ENCODE measurements at regions of chr11 and their contacts with region 1.

Region 1: DNA sequence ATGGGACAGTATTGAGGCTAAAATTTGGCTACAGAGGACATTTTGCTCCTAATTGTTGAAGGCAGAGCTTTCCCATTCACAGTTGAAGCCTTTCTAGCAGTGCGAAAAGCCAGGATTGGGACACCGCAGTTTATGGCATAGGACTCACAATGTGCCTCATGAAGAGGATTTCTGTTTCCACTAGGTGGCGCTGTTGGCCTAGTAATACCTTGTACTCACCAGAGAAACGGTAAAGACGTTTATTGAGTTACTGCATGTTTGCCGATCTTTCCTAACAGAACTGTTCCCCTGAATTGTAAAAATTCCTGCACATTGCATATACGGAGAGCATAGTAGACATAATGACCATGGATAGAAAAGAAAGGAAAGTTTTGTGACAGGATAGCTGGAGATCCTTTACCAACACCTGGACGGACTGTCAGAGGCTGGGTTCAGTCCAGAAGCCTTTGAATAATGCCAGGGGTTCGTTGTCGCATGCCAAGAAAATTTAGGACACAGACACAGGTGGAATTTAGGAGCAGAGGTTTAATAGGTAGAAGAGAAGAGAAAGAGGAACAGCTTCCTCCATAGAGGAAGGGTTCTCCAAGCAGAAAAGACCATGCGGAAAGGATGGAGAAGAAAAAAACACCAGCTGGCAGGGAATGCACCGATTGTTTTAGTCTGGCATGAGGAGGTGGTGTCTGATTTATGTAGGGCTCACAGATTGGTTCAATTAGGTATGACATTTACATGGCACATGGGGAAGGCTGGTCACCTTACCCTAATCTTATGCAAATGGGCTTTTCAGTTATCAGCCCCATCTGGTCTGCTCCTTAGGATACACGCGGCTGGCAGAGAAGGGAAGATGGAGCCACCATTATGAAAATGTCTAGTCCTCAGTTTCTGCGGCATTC is 10.8 kb upstream of the OR51D1 start:
- DNase-seq: peak; percentile 60
- ATAC-seq: peak; percentile 99
- H3K4me3 ChIP-seq: no peak overlapping the region
- H3K27ac ChIP-seq: no peak overlapping the region
- H3K4me1 ChIP-seq: no peaks in the 10 kb centered on the region
- H3K27me3 ChIP-seq: peaks cover 3% of the 10 kb centered on the region; the same call in 1 of the 2 replicates
- CTCF ChIP-seq: peak; percentile 88

Region 2: GRCh38 chr11:4636962-4637661 is 10.7 kb after region 1 on chr11 and contains the start of gene OR51D1:
- CTCF ChIA-PET with region 1: interaction called, 12 read pairs
- POLR2A ChIA-PET with region 1: interaction called, 3 read pairs
- in situ Hi-C with region 1: no loop called
- intact Hi-C with region 1: no loop called
- DNase-seq: peak; percentile 75
- ATAC-seq: peak; percentile 97
- H3K4me3 ChIP-seq: peak within 1 kb of the TSS in 1 of 2 experiments; percentile 34; a peak in 2 of 4 replicates
- H3K27ac ChIP-seq: no peak within 1 kb of the TSS
- H3K4me1 ChIP-seq: no peaks in the 10 kb centered on the region
- H3K27me3 ChIP-seq: peaks cover 6% of the 10 kb centered on the region; the same call in 1 of the 2 replicates
- CTCF ChIP-seq: peak; percentile 97
- total RNA-seq, gene OR51D1: not detected

Region 3: GRCh38 chr11:5004424-5005274 is 378.2 kb after region 1 on chr11:
- CTCF ChIA-PET with region 1: no interaction called
- POLR2A ChIA-PET with region 1: no interaction called
- in situ Hi-C with region 1: no loop called
- intact Hi-C with region 1: loop called (anchors 1 kb)
- DNase-seq: peak; percentile 52
- ATAC-seq: peak; percentile 83
- H3K4me3 ChIP-seq: no peak overlapping the region
- H3K27ac ChIP-seq: no peak overlapping the region
- H3K4me1 ChIP-seq: no peaks in the 10 kb centered on the region
- H3K27me3 ChIP-seq: no peaks in the 10 kb centered on the region; the same call in 1 of the 2 replicates
- CTCF ChIP-seq: peak; percentile 81

Region 4: DNA sequence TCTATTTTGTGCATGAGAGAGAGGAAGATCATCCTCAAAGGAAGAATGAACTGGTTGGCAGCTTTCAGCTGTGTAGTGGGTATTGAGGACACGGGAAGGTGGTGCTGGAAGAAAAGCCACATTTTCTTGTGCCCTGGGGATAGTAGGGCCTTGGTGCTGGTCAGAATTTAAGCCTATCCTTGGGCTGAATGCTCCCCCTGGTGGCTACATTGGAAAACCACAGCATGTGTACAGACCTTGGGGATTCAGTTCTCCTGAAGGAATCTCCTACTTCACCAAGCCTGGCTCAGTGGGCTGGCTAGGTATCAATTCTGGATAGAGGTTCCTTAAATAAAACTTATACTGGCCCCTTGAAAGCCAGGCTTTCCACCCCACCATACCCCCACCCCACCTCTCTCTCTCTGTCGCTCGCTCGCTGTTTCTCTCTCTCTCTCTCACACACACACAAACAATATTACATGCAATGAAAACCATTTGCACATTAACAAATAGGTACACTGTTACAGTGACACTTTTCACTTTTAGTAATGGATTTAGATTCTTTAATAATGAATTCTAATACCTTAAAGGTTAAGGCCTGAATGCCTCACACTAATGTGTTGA is 754.4 kb after region 1 on chr11:
- CTCF ChIA-PET with region 1: no interaction called
- POLR2A ChIA-PET with region 1: no interaction called
- in situ Hi-C with region 1: no loop called
- intact Hi-C with region 1: loop called (anchors 1 kb)
- DNase-seq: peak; percentile 45
- ATAC-seq: peak; percentile 99
- H3K4me3 ChIP-seq: no peak overlapping the region
- H3K27ac ChIP-seq: no peak overlapping the region
- H3K4me1 ChIP-seq: no peaks in the 10 kb centered on the region
- H3K27me3 ChIP-seq: no peaks in the 10 kb centered on the region
- CTCF ChIP-seq: peak; percentile 88

Region 5: DNA sequence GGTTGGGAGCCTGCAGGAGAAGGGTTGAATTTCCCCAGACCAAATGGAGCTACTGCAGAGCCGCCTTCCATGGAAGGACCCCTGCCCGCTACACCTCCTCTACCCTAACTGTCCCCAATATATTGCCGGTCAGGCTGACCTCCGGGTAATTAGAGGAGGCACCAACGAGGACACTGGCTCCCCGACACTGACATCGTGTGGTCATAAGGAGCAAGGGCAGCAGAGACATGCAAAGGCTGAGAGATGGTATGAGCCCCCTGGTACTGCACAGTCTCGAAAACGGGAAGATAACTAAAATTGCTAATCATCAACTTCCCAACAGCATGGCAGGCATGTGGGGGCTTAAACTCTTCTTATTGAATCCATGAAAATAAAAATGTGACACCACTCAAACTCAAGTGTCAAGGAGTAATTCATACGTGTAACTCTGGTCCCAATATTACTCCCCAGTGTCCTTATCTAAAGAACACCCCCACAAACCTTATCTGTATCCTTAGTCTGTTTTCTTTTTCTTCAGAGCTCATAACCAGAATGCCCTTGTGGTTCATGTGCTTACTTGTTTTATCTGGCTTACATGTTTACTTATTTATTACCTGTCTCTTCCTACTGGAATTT is 1689.5 kb after region 1 on chr11:
- CTCF ChIA-PET with region 1: no interaction called
- POLR2A ChIA-PET with region 1: no interaction called
- in situ Hi-C with region 1: no loop called
- intact Hi-C with region 1: loop called (anchors 10 kb)
- DNase-seq: no peak
- ATAC-seq: peak; percentile 57
- H3K4me3 ChIP-seq: no peak overlapping the region
- H3K27ac ChIP-seq: no peak overlapping the region
- H3K4me1 ChIP-seq: peaks cover 2% of the 10 kb centered on the region
- H3K27me3 ChIP-seq: peaks cover 23% of the 10 kb centered on the region
- CTCF ChIP-seq: peak; percentile 98

Measured in Panc1 (cell line).